BJ (cell line): ENCODE measurements at regions of chr3 and their contacts with region 1.

Region 1: DNA sequence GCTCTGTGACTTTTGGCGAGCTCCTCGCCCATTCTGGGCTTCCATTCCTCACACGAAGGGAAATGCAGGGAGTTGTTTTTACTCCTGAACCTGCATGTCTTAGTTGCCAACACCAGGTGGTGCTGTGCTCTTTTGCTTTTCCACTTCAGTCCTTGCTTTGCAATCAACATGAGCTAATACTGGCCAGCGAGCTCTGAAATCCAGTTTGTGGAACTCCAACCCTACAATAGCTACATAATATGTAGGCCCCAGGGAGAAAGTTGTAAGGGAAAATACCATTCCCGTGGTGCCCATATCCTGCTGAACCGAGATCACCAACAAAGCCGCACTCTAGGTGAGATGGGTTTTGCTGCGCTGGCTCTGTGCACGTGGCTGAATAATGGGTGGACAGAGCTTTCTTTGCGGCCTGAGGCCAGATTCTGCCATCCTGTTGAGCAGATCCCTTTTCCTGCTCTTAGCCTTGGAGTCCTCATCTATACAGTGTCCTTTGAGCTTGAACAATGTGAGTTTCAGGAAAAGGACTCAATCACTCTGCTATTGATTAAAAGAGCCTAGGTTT is 25.0 kb downstream of the LSM3 start:
- DNase-seq: no peak
- H3K4me3 ChIP-seq: no peak overlapping the region
- H3K27me3 ChIP-seq: no peaks in the 10 kb centered on the region
- CTCF ChIP-seq: peak; percentile 84

Region 2: GRCh38 chr3:14154895-14155440 is 48.6 kb before region 1 on chr3:
- CTCF ChIA-PET with region 1: no interaction called
- POLR2A ChIA-PET with region 1: no interaction called
- DNase-seq: no peak
- H3K4me3 ChIP-seq: no peak overlapping the region
- H3K27me3 ChIP-seq: no peaks in the 10 kb centered on the region
- CTCF ChIP-seq: no peak

Region 3: DNA sequence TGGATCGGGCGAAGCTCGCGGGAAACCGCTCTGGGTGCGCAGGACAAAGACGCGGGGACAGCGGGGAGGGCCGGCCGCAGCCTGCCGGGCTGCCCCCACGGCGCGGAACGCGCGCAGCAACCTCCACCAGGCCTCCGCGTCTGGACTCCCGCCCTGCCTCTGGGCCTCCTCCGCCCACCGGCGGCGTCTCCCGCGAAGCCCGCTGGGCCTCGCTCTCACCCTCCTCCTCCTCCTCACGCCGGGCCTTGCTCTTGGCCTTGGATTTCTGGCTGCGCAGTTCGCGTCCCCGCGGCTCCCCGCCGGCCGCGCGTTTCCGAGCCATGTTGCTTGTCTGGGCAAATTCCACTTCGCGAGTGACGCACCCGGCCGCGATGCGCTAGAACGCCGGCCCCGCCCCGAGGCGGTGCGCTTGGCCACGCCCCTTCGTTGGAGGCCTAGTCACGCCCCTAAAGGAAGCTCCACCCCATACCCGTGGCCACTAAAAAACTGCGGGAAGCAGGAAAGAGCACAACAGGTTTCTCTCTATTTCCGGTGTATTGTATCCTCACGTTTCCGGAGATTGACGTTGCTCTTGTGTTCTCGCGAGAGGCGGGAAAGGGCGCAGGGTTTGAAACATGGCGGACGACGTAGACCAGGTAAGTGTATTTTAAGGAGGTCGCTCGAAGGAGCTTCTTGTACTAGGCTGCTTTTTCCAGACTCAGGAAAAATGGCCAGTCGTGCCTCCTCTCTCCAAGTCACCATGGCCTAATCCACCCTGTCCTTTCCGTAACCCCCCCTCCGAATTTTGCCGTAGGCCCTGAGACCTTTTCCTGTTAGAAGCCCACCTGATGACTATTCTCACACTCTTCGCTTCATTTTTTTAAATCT is 25.1 kb before region 1 on chr3 and contains the starts of genes LSM3 and XPC:
- CTCF ChIA-PET with region 1: interaction called, 7 read pairs
- POLR2A ChIA-PET with region 1: interaction called, 10 read pairs
- DNase-seq: peak; percentile 92
- H3K4me3 ChIP-seq: peak within 1 kb of the TSS; percentile 97
- H3K27me3 ChIP-seq: no peaks in the 10 kb centered on the region
- CTCF ChIP-seq: no peak
- polyA plus RNA-seq, gene LSM3: 2.7 and 8.7 TPM in 2 replicates
- polyA plus RNA-seq, gene XPC: 36.0 and 36.9 TPM in 2 replicates

Region 4: DNA sequence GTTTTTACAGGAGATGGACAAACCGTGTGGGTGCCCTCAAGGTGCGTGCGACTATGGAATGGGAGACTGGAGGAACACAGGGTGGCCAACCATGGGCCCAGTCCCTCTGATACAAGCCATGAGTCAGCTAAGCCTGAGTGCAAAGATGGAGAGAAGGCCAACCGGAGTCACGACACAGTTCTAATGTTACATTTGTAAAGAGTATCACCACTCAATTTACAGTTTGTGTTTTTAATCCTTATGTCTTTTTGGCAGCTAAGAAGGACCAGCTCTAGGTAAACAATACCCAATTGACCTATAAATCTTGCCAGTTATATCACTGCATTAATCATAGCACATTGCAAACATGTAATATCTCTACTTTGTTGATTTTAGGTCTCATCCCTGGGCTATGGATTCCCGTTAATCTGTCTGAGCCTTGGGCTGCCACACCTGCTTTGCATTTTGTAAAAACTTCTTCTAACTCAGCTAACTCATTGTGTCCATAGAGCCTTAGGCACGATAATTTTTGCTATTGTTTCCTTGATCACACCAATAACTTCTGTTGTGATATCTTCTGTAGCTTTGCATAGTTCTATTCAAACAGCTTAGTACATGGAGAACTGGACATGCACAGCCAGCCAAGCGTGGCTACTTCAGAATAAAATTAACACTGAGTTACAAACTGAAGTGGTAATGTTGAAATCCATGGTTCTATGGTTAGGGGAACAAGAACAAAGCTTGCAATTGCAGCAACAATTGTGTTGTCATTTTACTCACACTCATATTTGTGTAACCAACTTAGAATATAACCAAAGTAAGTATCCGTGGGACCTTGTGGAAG is 25.3 kb after region 1 on chr3:
- CTCF ChIA-PET with region 1: interaction called, 25 read pairs
- POLR2A ChIA-PET with region 1: no interaction called
- DNase-seq: no peak
- H3K4me3 ChIP-seq: no peak overlapping the region
- H3K27me3 ChIP-seq: no peaks in the 10 kb centered on the region
- CTCF ChIP-seq: no peak

Region 5: DNA sequence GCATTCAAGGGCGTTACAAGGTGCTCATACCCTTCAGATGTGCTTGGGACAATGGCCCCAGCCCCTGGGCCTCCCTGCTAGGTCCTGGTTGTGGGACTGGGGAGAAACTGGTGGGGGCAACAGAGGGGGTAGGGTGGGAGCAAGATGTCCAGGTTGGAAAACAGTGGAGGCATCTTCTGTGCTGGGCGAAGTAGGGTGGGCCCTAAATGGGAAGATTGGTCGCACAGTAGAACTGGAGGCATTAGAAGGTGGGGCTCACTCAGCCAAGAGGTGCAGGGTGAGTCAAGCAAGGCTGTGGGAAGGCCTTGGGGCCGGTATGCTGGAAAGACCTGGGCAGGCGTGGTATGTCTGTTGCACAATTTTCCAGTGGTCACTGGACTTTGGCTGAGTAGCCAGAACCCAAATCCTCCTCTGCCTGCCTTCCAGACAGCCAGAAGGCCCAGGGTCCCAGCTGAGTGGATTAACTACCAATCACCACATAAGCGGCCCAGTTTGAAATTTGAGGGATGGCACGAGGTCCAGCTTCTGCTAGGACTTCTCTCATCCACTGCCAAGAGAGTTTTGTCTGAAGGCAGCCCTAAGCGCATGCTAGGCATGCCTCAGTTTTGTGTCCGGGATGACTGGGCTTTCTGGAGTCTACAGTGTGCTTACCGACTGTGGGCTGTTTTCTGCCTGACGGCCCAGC is 49.6 kb after region 1 on chr3:
- CTCF ChIA-PET with region 1: interaction called, 93 read pairs
- POLR2A ChIA-PET with region 1: interaction called, 3 read pairs
- DNase-seq: peak; percentile 34
- H3K4me3 ChIP-seq: no peak overlapping the region
- H3K27me3 ChIP-seq: no peaks in the 10 kb centered on the region
- CTCF ChIP-seq: no peak

Region 6: GRCh38 chr3:14403619-14404155 is 200.1 kb after region 1 on chr3:
- CTCF ChIA-PET with region 1: interaction called, 14 read pairs
- POLR2A ChIA-PET with region 1: interaction called, 3 read pairs
- DNase-seq: no peak
- H3K4me3 ChIP-seq: peak overlapping the region; percentile 99
- H3K27me3 ChIP-seq: no peaks in the 10 kb centered on the region
- CTCF ChIP-seq: no peak

Region 7: DNA sequence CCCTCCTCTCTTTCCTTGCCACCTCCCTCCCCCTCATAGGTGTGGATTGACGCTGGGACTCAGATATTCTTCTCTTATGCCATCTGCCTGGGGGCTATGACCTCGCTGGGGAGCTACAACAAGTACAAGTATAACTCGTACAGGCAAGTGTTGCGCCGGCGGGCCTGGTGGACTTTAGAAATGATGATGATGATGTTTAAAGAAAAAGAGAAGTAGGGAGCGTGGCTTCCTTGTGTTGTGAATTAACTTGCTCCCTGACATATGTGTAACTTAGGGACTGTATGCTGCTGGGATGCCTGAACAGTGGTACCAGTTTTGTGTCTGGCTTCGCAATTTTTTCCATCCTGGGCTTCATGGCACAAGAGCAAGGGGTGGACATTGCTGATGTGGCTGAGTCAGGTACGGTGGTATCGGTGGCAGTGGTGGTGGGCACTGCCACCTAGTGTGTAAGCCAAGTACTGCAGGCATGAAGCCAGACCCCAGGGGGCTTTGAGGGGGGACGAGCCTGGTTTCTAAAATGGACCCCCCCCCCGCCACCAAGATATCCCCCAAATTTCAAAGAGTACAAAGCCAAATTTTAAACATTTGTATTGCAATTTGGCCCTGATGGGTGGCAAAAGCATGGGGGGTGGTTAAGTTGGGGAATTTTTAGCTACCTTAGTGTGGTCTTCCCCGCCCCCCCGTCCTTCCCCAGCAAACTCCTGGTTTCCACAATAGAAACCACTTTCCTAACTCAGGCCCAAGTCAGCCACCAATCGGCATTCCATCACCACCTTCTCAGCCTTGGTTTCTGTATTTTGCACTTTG is 264.4 kb after region 1 on chr3:
- CTCF ChIA-PET with region 1: interaction called, 62 read pairs
- POLR2A ChIA-PET with region 1: no interaction called
- DNase-seq: no peak
- H3K4me3 ChIP-seq: no peak overlapping the region
- H3K27me3 ChIP-seq: no peaks in the 10 kb centered on the region
- CTCF ChIP-seq: peak; percentile 78